MCF 10A (cell line): ENCODE measurements at regions of chr4 and their contacts with region 1.

Region 1: DNA sequence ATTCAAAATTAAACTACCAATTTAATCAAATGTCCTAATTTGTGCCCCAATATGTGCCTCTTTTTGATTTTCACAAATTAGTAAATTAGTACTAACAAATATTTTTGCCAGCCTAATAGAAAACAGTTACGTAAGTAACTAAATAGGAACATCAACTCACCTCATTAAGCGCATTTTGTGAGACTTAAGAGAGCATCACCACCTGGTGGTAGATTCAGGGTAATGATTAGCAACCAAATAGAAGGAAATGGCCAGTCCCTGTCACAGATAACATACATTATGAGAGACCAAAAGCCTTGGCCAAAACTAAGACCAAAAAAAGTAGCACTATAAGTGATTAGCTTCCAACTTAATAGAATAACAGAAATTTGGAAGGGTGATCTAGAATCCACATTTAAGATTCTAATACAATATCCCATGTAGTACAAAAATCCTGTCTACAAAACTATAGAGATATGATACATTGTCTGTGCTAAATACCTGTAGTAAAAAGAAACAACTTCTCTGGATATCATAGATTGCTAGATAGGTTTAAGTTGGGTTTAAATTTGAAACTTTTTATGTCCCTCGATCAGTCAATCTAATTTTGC is 46.7 kb downstream of the C4orf46 start:
- DNase-seq: peak; percentile 79
- H3K4me3 Mint-ChIP-seq: no peak overlapping the region
- H3K27ac Mint-ChIP-seq: no peak overlapping the region
- H3K4me1 Mint-ChIP-seq: peaks cover 6% of the 10 kb centered on the region
- H3K27me3 Mint-ChIP-seq: no peaks in the 10 kb centered on the region
- CTCF ChIP-seq: peak; percentile 72

Region 2: GRCh38 chr4:158193171-158193749 is 431.7 kb before region 1 on chr4:
- CTCF ChIA-PET with region 1: interaction called, 10 read pairs
- POLR2A ChIA-PET with region 1: no interaction called
- intact Hi-C with region 1: loop called (anchors 5 kb)
- DNase-seq: peak; percentile 60
- H3K4me3 Mint-ChIP-seq: no peak overlapping the region
- H3K27ac Mint-ChIP-seq: no peak overlapping the region
- H3K4me1 Mint-ChIP-seq: no peaks in the 10 kb centered on the region
- H3K27me3 Mint-ChIP-seq: no peaks in the 10 kb centered on the region
- CTCF ChIP-seq: peak; percentile 51

Region 3: DNA sequence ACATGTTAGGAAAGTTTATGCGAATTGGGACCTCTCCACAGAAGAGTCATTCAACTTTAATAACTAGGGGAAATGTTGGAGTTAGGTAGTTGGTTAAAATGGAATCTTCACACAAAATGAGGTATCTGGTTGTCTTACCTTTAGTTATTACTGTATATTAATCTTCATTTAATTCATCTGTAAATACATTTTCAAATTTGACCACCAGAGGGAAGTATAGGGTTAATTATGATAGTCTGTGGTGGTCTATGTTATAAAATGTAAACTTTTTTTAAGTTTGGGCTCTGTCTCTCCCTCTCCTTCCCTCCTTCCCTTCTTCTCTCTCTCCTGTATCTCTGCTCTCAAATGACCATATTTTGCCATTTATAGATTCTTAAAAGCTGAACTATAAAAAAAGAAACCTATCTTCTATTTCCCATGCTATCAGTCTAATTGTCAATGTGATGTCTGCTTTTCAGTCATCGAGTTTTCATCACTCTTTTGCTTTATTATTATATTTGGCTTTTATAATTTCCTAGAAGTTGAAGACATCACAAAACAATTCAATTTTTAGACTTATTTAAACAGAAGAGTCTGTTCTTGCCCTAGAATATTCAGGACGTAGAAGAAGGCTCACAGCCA is 364.9 kb before region 1 on chr4:
- CTCF ChIA-PET with region 1: interaction called, 76 read pairs
- POLR2A ChIA-PET with region 1: interaction called, 3 read pairs
- intact Hi-C with region 1: loop called (anchors 1 kb)
- DNase-seq: peak; percentile 56
- H3K4me3 Mint-ChIP-seq: no peak overlapping the region
- H3K27ac Mint-ChIP-seq: peak overlapping the region; percentile 40
- H3K4me1 Mint-ChIP-seq: peaks cover 6% of the 10 kb centered on the region
- H3K27me3 Mint-ChIP-seq: no peaks in the 10 kb centered on the region
- CTCF ChIP-seq: peak; percentile 59

Region 4: DNA sequence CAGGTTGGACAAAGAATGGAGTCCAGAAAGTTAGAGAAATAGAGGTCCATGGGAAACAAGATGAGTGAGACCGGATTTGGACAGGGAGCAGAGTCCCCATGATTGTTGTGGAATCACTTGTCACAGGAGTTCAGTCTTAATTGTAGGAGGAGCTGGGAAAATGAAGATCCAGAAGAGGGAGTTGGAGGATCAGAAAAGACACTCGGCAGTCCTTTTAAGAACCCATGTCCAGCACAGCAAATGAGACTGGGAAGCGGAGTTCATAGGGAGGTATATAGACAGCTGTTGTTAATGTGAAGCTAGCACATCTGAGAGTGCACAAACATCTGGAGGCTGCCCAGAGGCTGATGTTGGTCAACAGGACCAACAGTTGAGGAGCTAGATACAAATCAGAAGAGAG is 214.7 kb before region 1 on chr4:
- CTCF ChIA-PET with region 1: interaction called, 9 read pairs
- POLR2A ChIA-PET with region 1: no interaction called
- intact Hi-C with region 1: loop called (anchors 1 kb)
- DNase-seq: peak; percentile 44
- H3K4me3 Mint-ChIP-seq: no peak overlapping the region
- H3K27ac Mint-ChIP-seq: no peak overlapping the region
- H3K4me1 Mint-ChIP-seq: peaks cover 6% of the 10 kb centered on the region
- H3K27me3 Mint-ChIP-seq: no peaks in the 10 kb centered on the region
- CTCF ChIP-seq: no peak